PC-3 (cell line): ENCODE measurements at regions of chr3 and their contacts with region 1.

Region 1: GRCh38 chr3:175260145-175260794 is 401.1 kb downstream of the NAALADL2 start:
- DNase-seq: peak; percentile 66
- ATAC-seq: peak; percentile 74
- H3K4me3 ChIP-seq: peak overlapping the region; percentile 11; the same call in 1 of the 2 replicates
- H3K27ac ChIP-seq: peak overlapping the region; percentile 87
- H3K4me1 ChIP-seq: peaks cover 29% of the 10 kb centered on the region
- H3K27me3 ChIP-seq: no peaks in the 10 kb centered on the region
- CTCF ChIP-seq: no peak

Region 2: DNA sequence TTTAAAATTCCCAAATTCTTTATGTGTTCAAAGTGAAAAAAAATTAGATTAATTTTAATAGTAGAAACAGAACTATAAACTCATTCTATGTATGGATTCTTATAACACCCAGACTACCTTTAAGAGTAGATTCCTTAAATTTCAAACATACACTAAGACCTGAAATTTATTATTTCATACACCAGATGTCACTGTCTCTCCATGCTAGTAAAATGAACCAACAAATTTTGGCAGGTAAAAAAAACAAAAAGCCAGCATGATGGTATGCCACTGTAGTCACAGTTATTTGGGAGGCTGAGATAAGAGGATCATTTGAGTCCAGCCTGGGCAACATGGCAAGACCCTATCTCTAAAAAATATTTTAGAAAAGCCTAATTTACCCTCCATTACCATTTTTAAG is 862.4 kb before region 1 on chr3:
- CTCF ChIA-PET with region 1: no interaction called
- POLR2A ChIA-PET with region 1: no interaction called
- intact Hi-C with region 1: loop called (anchors 5 kb)
- DNase-seq: peak; percentile 73
- ATAC-seq: no peak
- H3K4me3 ChIP-seq: no peak overlapping the region
- H3K27ac ChIP-seq: no peak overlapping the region
- H3K4me1 ChIP-seq: no peaks in the 10 kb centered on the region
- H3K27me3 ChIP-seq: no peaks in the 10 kb centered on the region
- CTCF ChIP-seq: peak; percentile 69

Region 3: DNA sequence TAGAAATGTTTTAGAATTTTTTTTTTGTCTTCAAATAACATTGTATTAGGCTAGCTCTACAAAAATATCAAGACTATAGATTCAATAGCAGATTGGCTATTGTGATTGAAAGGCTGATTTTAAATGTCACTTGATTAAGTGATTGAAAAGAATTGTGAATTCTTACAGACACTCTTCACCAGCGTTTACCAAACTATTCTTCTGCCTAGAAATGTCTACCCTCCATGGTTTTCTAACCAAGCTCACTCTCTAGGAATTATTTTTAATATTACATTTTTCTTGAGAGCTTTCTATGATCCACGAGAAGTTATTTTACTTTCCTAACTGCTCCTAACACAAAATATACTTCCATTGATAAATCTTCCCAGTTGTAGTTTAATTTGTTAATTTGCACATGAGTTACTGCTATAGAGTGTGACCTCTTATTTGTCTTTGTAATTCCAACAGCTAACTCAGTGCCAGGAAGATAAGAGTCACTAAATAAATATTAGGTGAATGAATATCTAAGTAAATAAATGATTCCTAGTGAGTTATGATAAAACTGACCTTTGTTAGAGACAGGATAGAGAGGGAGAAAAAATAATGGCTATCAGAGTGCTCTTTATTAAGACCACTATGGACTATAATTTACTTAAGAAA is 81.3 kb before region 1 on chr3:
- CTCF ChIA-PET with region 1: no interaction called
- POLR2A ChIA-PET with region 1: no interaction called
- intact Hi-C with region 1: loop called (anchors 5 kb)
- DNase-seq: peak; percentile 85
- ATAC-seq: peak; percentile 93
- H3K4me3 ChIP-seq: no peak overlapping the region
- H3K27ac ChIP-seq: peak overlapping the region; percentile 51
- H3K4me1 ChIP-seq: peaks cover 18% of the 10 kb centered on the region
- H3K27me3 ChIP-seq: no peaks in the 10 kb centered on the region
- CTCF ChIP-seq: no peak

Region 4: GRCh38 chr3:175193815-175194518 is 66.3 kb before region 1 on chr3:
- CTCF ChIA-PET with region 1: no interaction called
- POLR2A ChIA-PET with region 1: no interaction called
- intact Hi-C with region 1: loop called (anchors 5 kb)
- DNase-seq: peak; percentile 84
- ATAC-seq: peak; percentile 75
- H3K4me3 ChIP-seq: no peak overlapping the region
- H3K27ac ChIP-seq: peak overlapping the region; percentile 89
- H3K4me1 ChIP-seq: peaks cover 34% of the 10 kb centered on the region
- H3K27me3 ChIP-seq: no peaks in the 10 kb centered on the region
- CTCF ChIP-seq: no peak